WTC11 (cell line): ENCODE measurements at regions of chr1 and their contacts with region 1.

Region 1: DNA sequence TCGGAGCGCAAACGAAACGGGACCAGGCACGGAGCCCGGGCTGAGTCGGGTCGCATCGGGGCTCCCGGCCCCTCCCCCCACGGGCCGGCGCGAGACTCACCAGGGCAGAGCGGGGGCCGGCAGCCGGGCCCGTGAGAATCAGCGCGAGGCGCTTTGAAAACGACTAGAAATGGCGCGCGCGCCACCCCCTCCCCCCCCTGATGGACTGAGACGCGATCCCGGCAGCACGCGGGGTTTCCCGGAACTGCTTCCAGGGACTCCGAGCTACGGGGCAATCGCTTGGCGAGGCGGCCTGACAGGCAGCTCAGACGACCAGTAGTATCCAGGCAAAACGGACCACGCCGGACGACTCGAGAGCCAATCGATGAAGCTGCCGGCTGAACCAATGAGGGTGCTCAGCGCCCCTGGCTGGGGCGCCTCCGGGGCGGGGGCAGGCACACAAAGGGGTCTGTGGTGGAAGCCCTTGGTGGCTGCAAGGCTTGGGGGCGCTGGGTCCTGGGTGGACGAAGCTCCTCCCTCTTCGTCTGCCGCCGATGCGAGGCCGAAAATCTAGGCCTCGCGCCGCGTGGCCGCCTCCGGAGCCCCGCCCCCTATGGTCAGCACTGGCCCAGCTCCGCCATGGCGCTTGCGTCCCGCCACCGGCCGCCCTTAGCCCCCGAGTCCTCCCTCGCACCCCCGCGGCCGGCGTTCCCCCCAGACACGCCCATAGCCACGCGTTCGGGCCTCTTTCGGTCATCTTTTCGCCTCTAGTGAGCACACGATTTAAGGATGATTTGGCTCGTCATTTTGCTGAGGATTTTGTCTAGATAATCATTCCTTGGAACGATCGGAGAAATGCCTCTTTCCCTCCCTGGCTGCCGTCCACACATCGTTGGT is at the start of gene HNRNPR:
- DNase-seq: peak; percentile 100
- ATAC-seq: peak; percentile 99
- H3K4me3 Mint-ChIP-seq: peak within 1 kb of the TSS; percentile 88
- H3K27ac Mint-ChIP-seq: peak within 1 kb of the TSS; percentile 99
- H3K4me1 Mint-ChIP-seq: peaks cover 43% of the 10 kb centered on the region
- H3K27me3 Mint-ChIP-seq: peaks cover 47% of the 10 kb centered on the region
- CTCF ChIP-seq: no peak
- total RNA-seq, gene HNRNPR: 157 to 178 TPM (median 170 TPM) in 3 replicates

Region 2: DNA sequence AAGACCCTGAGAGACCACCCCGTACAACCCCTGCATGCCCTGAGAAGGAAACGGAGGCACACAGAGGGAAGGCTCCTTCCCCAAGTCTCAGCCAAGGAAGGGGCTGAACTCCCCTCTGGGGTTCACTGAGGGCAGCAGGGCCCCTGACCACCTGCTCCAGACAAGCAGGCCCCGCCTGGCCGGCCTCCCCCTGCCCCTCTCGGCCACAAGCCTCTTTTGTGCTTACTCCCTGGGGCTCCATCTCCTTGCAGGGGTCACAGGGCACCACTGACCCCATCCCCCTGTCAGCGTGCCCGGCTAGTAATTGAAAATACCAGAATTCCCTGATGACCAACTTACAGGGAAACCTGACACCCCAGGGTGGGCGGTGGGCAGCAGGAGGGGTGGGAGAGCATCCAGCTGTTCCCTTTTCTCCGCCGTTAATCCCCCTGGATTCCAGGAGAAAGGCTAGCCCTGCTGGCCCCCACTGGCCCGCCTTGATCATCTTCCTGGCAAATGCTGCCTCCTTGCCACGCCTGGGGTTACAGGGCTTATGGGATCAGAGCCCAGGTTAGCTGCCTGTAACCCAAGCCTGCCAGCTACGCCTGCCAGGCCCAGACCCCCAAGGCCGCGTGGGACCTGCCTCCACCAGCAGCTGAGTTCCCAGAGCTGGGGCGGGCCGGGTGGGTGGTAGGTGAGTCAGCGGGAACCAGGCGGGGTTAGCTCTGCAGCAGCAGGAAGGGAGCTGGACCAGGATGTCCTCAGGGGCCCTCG is 467.8 kb before region 1 on chr1:
- CTCF ChIA-PET with region 1: no interaction called
- POLR2A ChIA-PET with region 1: no interaction called
- DNase-seq: no peak
- ATAC-seq: peak; percentile 29
- H3K4me3 Mint-ChIP-seq: no peak overlapping the region
- H3K27ac Mint-ChIP-seq: no peak overlapping the region
- H3K4me1 Mint-ChIP-seq: peaks cover 6% of the 10 kb centered on the region
- H3K27me3 Mint-ChIP-seq: no peaks in the 10 kb centered on the region
- CTCF ChIP-seq: no peak

Region 3: DNA sequence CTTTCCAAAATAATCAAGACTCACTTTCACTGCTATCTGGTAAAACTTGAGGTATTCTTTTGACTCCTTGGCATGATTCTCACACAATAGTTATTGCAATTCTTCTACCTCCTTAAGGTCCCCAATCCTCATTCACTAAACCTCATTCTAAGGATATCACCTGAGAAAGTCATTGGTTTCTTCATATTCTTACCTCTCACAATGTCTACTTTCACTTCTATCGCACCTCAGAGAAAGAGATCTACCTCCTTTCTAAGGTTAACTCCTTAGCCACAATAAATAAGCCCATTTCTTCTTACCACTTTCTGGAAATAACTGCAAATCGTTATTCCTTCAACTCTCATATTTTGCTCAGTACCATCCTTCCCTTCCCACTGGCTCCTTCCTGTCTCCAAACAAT is 19.0 kb before region 1 on chr1:
- CTCF ChIA-PET with region 1: no interaction called
- POLR2A ChIA-PET with region 1: no interaction called
- DNase-seq: no peak
- ATAC-seq: no peak
- H3K4me3 Mint-ChIP-seq: no peak overlapping the region
- H3K27ac Mint-ChIP-seq: peak overlapping the region; percentile 6; the same call in 1 of the 2 replicates
- H3K4me1 Mint-ChIP-seq: no peaks in the 10 kb centered on the region
- H3K27me3 Mint-ChIP-seq: no peaks in the 10 kb centered on the region
- CTCF ChIP-seq: no peak

Region 4: GRCh38 chr1:23357138-23357908 is 13.0 kb after region 1 on chr1:
- CTCF ChIA-PET with region 1: interaction called, 6 read pairs
- POLR2A ChIA-PET with region 1: interaction called, 12 read pairs
- DNase-seq: no peak
- ATAC-seq: peak; percentile 96
- H3K4me3 Mint-ChIP-seq: no peak overlapping the region
- H3K27ac Mint-ChIP-seq: no peak overlapping the region
- H3K4me1 Mint-ChIP-seq: no peaks in the 10 kb centered on the region
- H3K27me3 Mint-ChIP-seq: peaks cover 100% of the 10 kb centered on the region
- CTCF ChIP-seq: no peak

Region 5: GRCh38 chr1:23367791-23368561 is 23.6 kb after region 1 on chr1:
- CTCF ChIA-PET with region 1: interaction called, 15 read pairs
- POLR2A ChIA-PET with region 1: interaction called, 22 read pairs
- DNase-seq: peak; percentile 98
- ATAC-seq: peak; percentile 90
- H3K4me3 Mint-ChIP-seq: peak overlapping the region; percentile 92
- H3K27ac Mint-ChIP-seq: peak overlapping the region; percentile 96
- H3K4me1 Mint-ChIP-seq: peaks cover 32% of the 10 kb centered on the region
- H3K27me3 Mint-ChIP-seq: peaks cover 50% of the 10 kb centered on the region
- CTCF ChIP-seq: no peak

Region 6: GRCh38 chr1:23428136-23428905 is 84.0 kb after region 1 on chr1:
- CTCF ChIA-PET with region 1: no interaction called
- POLR2A ChIA-PET with region 1: no interaction called
- DNase-seq: no peak
- ATAC-seq: no peak
- H3K4me3 Mint-ChIP-seq: no peak overlapping the region
- H3K27ac Mint-ChIP-seq: no peak overlapping the region
- H3K4me1 Mint-ChIP-seq: peaks cover 8% of the 10 kb centered on the region; the same call in 1 of the 2 replicates
- H3K27me3 Mint-ChIP-seq: peaks cover 55% of the 10 kb centered on the region
- CTCF ChIP-seq: no peak